IMR-90 (cell line): ENCODE measurements at regions of chr21 and their contacts with region 1.

Region 1: DNA sequence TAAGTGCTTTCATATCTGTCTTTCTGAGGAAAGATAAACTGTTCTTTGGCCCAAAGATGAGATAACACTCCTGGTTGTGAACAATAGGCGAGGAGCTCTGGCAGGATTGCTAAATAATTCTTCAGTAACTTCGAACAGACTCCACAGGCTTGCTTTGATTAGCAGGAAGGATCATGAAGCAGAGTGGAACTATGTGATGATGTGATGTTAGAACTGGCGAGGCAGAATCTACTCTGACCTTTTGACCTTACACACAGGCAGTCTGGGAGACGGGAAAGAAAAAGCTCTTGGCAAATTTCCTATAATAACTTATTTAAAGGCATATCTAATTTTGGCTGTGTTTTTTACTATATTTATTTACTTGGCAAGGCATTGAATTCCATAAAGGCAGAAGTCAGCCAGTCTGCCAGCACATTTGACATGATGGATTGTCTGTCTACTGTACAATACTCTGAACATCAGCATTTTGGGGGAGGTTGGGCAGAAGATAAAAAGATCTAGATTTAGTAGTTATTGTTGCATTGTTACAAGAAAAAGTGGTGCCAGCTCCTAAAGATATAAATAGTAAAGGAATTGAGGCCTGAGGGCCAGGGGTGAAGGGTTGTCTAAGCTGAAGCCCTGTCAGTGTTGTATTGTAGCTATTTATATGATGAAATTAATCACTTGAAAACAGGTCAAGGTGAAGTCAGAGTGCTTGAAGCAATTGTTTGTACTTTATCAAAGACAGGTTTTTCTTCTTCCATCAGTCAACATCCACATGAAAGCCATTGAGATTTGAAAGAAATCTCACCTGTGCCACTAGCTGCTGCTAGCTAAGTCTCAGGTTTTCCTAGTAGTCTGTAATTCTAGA is 708.8 kb downstream of the LTN1 start:
- DNase-seq: peak; percentile 94
- ATAC-seq: peak; percentile 98
- H3K4me3 ChIP-seq: no peak overlapping the region
- H3K27ac ChIP-seq: peak overlapping the region; percentile 1; the same call in 1 of the 2 replicates
- H3K4me1 ChIP-seq: no peaks in the 10 kb centered on the region; the same call in 1 of the 2 replicates
- H3K27me3 ChIP-seq: no peaks in the 10 kb centered on the region
- CTCF ChIP-seq: no peak
- POLR2A ChIP-seq: no peak
- RAD21 ChIP-seq: no peak

Region 2: GRCh38 chr21:28240586-28240985 is 43.3 kb before region 1 on chr21:
- CTCF ChIA-PET with region 1: no interaction called
- POLR2A ChIA-PET with region 1: no interaction called
- dilution Hi-C with region 1: no loop called
- in situ Hi-C with region 1: no loop called
- intact Hi-C with region 1: loop called (anchors 5 kb)
- DNase-seq: peak; percentile 81
- ATAC-seq: peak; percentile 85
- H3K4me3 ChIP-seq: no peak overlapping the region
- H3K27ac ChIP-seq: peak overlapping the region; percentile 62; the same call in 1 of the 2 replicates
- H3K4me1 ChIP-seq: peaks cover 8% of the 10 kb centered on the region
- H3K27me3 ChIP-seq: no peaks in the 10 kb centered on the region
- CTCF ChIP-seq: no peak
- POLR2A ChIP-seq: no peak
- RAD21 ChIP-seq: no peak